HCT116 (cell line): ENCODE measurements at regions of chr1 and their contacts with region 1.

Region 1: GRCh38 chr1:24391882-24392603 is 21.5 kb downstream of the STPG1 start:
- DNase-seq: no peak
- ATAC-seq: peak; percentile 82
- H3K4me3 ChIP-seq: no peak overlapping the region
- H3K27ac ChIP-seq: no peak overlapping the region
- H3K4me1 ChIP-seq: peaks cover 8 to 35% of the 10 kb centered on the region in 2 experiments
- H3K27me3 ChIP-seq: no peaks in the 10 kb centered on the region
- CTCF ChIP-seq: peak; percentile 81 to 91 (median 90)
- POLR2A ChIP-seq: no peak
- RAD21 ChIP-seq: peak; percentile 91

Region 2: GRCh38 chr1:23772049-23772853 is 619.8 kb before region 1 on chr1:
- CTCF ChIA-PET with region 1: no interaction called
- POLR2A ChIA-PET with region 1: no interaction called
- RAD21 ChIA-PET with region 1: no interaction called
- intact Hi-C with region 1: loop called (anchors 5 kb)
- DNase-seq: peak; percentile 64
- ATAC-seq: peak; percentile 97
- H3K4me3 ChIP-seq: no peak overlapping the region
- H3K27ac ChIP-seq: no peak overlapping the region
- H3K4me1 ChIP-seq: peaks cover 4 to 6% of the 10 kb centered on the region in 2 experiments; a peak in 2 of 4 replicates
- H3K27me3 ChIP-seq: no peaks in the 10 kb centered on the region
- CTCF ChIP-seq: peak; percentile 85 to 97 (median 93)
- POLR2A ChIP-seq: no peak
- RAD21 ChIP-seq: peak; percentile 90

Region 3: GRCh38 chr1:24150234-24151174 is 241.5 kb before region 1 on chr1:
- CTCF ChIA-PET with region 1: interaction called, 68 read pairs
- POLR2A ChIA-PET with region 1: interaction called, 10 read pairs
- RAD21 ChIA-PET with region 1: interaction called, 4 to 10 read pairs
- intact Hi-C with region 1: loop called (anchors 1 kb)
- DNase-seq: peak; percentile 85
- ATAC-seq: peak; percentile 95
- H3K4me3 ChIP-seq: peak overlapping the region; percentile 49 to 64
- H3K27ac ChIP-seq: peak overlapping the region; percentile 4; the same call in 1 of the 2 replicates
- H3K4me1 ChIP-seq: peaks cover 5 to 21% of the 10 kb centered on the region in 2 experiments
- H3K27me3 ChIP-seq: no peaks in the 10 kb centered on the region
- CTCF ChIP-seq: peak; percentile 77 to 86 (median 82)
- POLR2A ChIP-seq: no peak
- RAD21 ChIP-seq: peak; percentile 78

Region 4: GRCh38 chr1:24161270-24161669 is 230.8 kb before region 1 on chr1:
- CTCF ChIA-PET with region 1: no interaction called
- POLR2A ChIA-PET with region 1: no interaction called
- RAD21 ChIA-PET with region 1: no interaction called
- intact Hi-C with region 1: no loop called
- DNase-seq: no peak
- ATAC-seq: no peak
- H3K4me3 ChIP-seq: no peak overlapping the region
- H3K27ac ChIP-seq: no peak overlapping the region
- H3K4me1 ChIP-seq: no peaks in the 10 kb centered on the region
- H3K27me3 ChIP-seq: no peaks in the 10 kb centered on the region
- CTCF ChIP-seq: no peak
- POLR2A ChIP-seq: no peak
- RAD21 ChIP-seq: no peak

Region 5: GRCh38 chr1:24283326-24284155 is 108.5 kb before region 1 on chr1:
- CTCF ChIA-PET with region 1: interaction called, 10 read pairs
- POLR2A ChIA-PET with region 1: no interaction called
- RAD21 ChIA-PET with region 1: no interaction called
- intact Hi-C with region 1: no loop called
- DNase-seq: peak; percentile 56
- ATAC-seq: peak; percentile 64
- H3K4me3 ChIP-seq: peak overlapping the region in 1 of 2 experiments; percentile 29; a peak in 2 of 4 replicates
- H3K27ac ChIP-seq: peak overlapping the region; percentile 66
- H3K4me1 ChIP-seq: peaks cover 38 to 49% of the 10 kb centered on the region in 2 experiments
- H3K27me3 ChIP-seq: peaks cover 5% of the 10 kb centered on the region; the same call in 1 of the 2 replicates
- CTCF ChIP-seq: no peak
- POLR2A ChIP-seq: no peak
- RAD21 ChIP-seq: no peak; the same call in 1 of the 2 replicates

Region 6: GRCh38 chr1:24403806-24404205 is 11.8 kb after region 1 on chr1:
- CTCF ChIA-PET with region 1: interaction called, 20 read pairs
- POLR2A ChIA-PET with region 1: no interaction called
- RAD21 ChIA-PET with region 1: no interaction called
- intact Hi-C with region 1: no loop called
- DNase-seq: no peak
- ATAC-seq: no peak
- H3K4me3 ChIP-seq: no peak overlapping the region
- H3K27ac ChIP-seq: no peak overlapping the region
- H3K4me1 ChIP-seq: no peaks in the 10 kb centered on the region
- H3K27me3 ChIP-seq: no peaks in the 10 kb centered on the region
- CTCF ChIP-seq: no peak
- POLR2A ChIP-seq: no peak
- RAD21 ChIP-seq: no peak

Region 7: DNA sequence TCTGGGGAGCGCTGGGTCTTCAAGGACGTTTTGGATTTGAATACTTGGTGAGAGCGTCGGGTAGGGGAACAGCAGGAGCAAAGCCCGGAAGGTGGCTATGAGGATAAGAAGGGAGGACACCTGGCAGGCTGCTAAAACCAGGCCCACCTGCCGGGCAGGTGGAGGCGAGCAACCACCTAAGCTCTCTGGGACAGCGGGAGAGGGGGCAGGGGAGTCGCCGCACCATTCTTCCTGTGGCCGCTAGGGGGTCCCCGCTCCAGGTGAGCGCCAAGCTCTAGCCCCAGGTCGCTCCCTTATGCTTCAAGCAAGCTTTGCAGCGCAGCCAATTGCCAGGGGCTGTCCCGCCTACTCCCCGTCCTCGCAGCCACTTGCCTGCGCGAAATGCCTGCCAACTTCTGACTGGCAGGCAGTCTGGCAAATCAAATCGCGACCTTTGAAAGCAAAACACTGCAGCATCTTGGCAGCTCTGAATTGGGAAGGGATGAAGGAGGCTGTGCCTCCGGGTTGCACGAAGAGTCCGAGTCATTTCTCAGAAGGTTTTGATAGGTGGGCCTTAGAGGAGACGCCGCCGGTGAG is 23.4 kb after region 1 on chr1 and contains the start of gene NIPAL3:
- CTCF ChIA-PET with region 1: interaction called, 20 read pairs
- POLR2A ChIA-PET with region 1: no interaction called
- RAD21 ChIA-PET with region 1: no interaction called
- intact Hi-C with region 1: no loop called
- DNase-seq: peak; percentile 99
- ATAC-seq: peak; percentile 90
- H3K4me3 ChIP-seq: peak within 1 kb of the TSS; percentile 87 to 88
- H3K27ac ChIP-seq: 0 out of 2 replicates have a peak within 1 kb of the TSS, but pooled peaks have one; percentile 26
- H3K4me1 ChIP-seq: peaks cover 40 to 79% of the 10 kb centered on the region in 2 experiments
- H3K27me3 ChIP-seq: no peaks in the 10 kb centered on the region
- CTCF ChIP-seq: peak; percentile 73 to 87 (median 80)
- POLR2A ChIP-seq: no peak
- RAD21 ChIP-seq: peak; percentile 79
- total RNA-seq, gene NIPAL3: 16.6 TPM

Region 8: DNA sequence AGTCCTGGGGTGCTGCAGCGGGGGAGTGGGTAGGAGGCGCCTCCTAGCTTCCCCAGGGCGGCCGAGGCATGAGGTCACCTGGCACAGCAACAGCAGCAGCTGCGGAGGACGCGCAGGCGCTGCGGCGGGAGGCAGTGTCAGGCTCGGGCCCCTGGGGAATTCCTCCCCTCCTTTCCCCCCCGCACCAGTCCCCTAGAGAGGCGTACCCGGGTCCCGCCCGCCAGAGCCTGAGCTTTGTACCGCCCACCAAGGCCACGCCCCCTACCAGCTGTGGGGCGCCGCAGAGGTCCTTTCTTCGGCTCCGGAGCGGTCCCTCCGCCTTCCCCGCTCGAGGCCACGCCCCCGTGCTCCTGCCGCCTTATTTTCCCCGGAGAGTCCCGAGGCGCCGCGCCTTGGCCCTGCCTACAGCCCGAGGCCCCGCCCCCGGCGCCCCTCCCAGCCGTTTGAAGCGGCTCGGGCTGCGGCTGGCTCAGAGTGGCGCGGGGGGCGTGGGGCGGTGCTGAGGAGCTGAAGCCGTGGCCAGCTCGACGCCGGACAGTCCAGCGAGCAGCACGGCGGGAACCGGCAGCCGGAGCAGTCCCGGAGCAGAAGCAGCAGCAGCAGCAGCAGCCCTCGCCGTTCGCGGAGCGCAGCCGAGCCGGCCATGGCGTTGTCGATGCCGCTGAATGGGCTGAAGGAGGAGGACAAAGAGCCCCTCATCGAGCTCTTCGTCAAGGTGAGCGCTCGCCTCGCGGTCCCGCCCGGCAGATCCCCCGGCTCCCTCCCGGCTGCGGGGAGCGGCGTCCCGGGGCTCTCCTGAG is 353.1 kb after region 1 on chr1 and contains the start of gene CLIC4:
- CTCF ChIA-PET with region 1: no interaction called
- POLR2A ChIA-PET with region 1: no interaction called
- RAD21 ChIA-PET with region 1: no interaction called
- intact Hi-C with region 1: no loop called
- DNase-seq: peak; percentile 94
- ATAC-seq: peak; percentile 93
- H3K4me3 ChIP-seq: peak within 1 kb of the TSS; percentile 62 to 80
- H3K27ac ChIP-seq: peak within 1 kb of the TSS; percentile 67
- H3K4me1 ChIP-seq: peaks cover 20 to 42% of the 10 kb centered on the region in 2 experiments
- H3K27me3 ChIP-seq: no peaks in the 10 kb centered on the region
- CTCF ChIP-seq: no peak
- POLR2A ChIP-seq: peak; percentile 42
- RAD21 ChIP-seq: peak; percentile 54
- total RNA-seq, gene CLIC4: 77.2 TPM

Region 9: DNA sequence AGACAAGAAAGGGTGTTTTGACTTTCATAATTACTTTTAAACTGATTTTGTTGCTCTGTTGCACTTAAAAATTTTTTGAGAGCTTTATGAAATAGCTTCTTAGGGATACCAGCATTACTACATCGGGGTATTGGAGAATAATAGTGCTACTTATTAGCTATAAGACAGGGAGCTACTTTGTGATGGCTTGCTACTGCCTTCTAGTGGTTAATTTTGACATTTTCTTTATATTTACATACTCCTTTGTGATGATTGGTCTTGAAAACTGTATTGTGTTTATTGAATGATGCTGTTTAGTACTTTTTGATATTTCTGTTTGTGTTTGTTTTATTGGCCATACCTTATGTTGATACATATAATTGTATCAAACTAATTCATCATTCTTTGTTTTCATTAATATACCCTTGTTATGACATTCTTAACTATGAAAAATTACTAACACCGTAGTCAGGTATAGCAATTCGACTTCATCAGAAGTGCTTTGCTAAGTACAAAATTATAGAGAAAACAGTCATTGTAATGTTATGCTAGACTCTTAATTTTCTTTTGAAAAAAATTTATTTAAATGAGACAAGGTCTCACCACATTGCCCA is 438.7 kb after region 1 on chr1:
- CTCF ChIA-PET with region 1: interaction called, 33 read pairs
- POLR2A ChIA-PET with region 1: no interaction called
- RAD21 ChIA-PET with region 1: interaction called in 1 of 2 experiments, 3 read pairs
- intact Hi-C with region 1: loop called (anchors 10 kb)
- DNase-seq: peak; percentile 68
- ATAC-seq: peak; percentile 84
- H3K4me3 ChIP-seq: no peak overlapping the region
- H3K27ac ChIP-seq: no peak overlapping the region
- H3K4me1 ChIP-seq: peaks cover 0 to 14% of the 10 kb centered on the region in 2 experiments; a peak in 2 of 4 replicates
- H3K27me3 ChIP-seq: no peaks in the 10 kb centered on the region
- CTCF ChIP-seq: peak; percentile 59 to 92 (median 82); a peak in 5 of 6 replicates
- POLR2A ChIP-seq: no peak
- RAD21 ChIP-seq: peak; percentile 92